ENCODE measurements at regions of chr21 and their contacts with region 1.

Region 1: DNA sequence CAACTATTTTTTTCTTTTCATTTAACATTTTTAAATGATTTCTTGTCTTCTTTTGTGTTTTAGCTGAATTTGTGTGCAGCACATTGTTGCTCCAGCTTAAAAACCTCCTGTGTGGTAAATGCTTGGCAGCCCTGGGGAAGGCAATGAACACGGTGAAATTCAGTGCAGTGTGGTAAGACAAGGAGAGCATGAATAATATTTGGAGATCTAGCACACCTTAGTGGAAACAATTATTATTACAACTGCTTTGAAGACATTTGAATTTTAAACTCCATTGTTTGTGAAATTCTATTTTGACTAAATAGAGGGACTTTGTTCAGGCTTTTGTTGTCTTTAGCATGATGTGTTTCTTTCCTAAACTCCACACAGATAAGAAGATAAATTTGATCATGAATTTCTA is 242.6 kb upstream of the CXADR start:
- DNase-seq: peak; percentile 10 to 14
- H3K4me3 ChIP-seq: no peak overlapping the region
- H3K4me1 ChIP-seq: no peaks in the 10 kb centered on the region
- H3K27me3 ChIP-seq: no peaks in the 10 kb centered on the region

Region 2: GRCh38 chr21:16942703-16943102 is 327.5 kb before region 1 on chr21:
- in situ Hi-C with region 1: loop called (anchors 25 kb)
- DNase-seq: peak; percentile 39 to 42
- H3K4me3 ChIP-seq: no peak overlapping the region
- H3K4me1 ChIP-seq: no peaks in the 10 kb centered on the region
- H3K27me3 ChIP-seq: no peaks in the 10 kb centered on the region

Region 3: GRCh38 chr21:17636711-17637110 is 366.5 kb after region 1 on chr21:
- in situ Hi-C with region 1: no loop called
- DNase-seq: no peak
- H3K4me3 ChIP-seq: no peak overlapping the region
- H3K4me1 ChIP-seq: no peaks in the 10 kb centered on the region; the same call in 1 of the 2 replicates
- H3K27me3 ChIP-seq: no peaks in the 10 kb centered on the region

Measured in HAP-1 (cell line).